ENCODE measurements at regions of chr1 and their contacts with region 1.

Region 1: GRCh38 chr1:1858382-1859086 is 32.4 kb downstream of the GNB1 start:
- DNase-seq: peak; percentile 98
- H3K4me3 ChIP-seq: no peak overlapping the region
- H3K27ac ChIP-seq: peak overlapping the region; percentile 77
- H3K4me1 ChIP-seq: peaks cover 28% of the 10 kb centered on the region
- H3K27me3 ChIP-seq: no peaks in the 10 kb centered on the region
- CTCF ChIP-seq: peak; percentile 37 to 65
- POLR2A ChIP-seq: no peak

Region 2: DNA sequence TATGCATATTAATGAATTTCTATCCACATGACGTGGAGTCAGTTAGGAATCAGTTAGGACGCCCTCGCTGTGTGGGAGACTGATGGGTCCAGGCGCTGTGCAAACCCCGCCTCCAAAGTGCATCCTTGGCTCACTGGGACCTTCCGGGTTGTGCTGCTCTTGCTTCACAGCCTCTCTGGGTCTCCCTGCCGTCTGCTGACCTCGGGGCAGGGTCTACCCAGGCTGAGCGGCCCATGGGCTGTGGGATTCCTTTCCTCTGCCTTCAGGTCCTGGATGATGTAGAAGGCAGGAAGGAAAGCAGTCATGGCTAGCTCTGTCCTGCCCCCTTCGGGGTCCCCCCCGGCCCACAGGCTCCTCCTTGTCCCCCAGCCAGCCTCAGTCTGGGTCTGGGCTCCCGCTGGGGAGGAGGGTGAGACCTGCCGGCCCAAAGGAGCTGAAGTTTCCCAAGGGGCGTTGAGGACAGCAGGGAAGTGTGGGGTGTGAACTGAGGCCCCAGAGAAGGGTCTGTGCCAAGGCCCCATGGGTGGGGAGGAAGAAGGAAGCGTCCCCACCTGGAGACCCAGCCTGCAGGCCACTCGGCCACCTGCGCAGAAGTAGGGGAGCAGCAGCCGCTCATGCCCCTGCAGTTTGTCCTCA is 109.7 kb before region 1 on chr1:
- CTCF ChIA-PET with region 1: no interaction called
- POLR2A ChIA-PET with region 1: no interaction called
- dilution Hi-C with region 1: no loop called
- intact Hi-C with region 1: no loop called
- DNase-seq: no peak
- H3K4me3 ChIP-seq: no peak overlapping the region
- H3K27ac ChIP-seq: no peak overlapping the region
- H3K4me1 ChIP-seq: no peaks in the 10 kb centered on the region
- H3K27me3 ChIP-seq: no peaks in the 10 kb centered on the region
- CTCF ChIP-seq: no peak
- POLR2A ChIP-seq: no peak

Region 3: GRCh38 chr1:1839311-1839975 is 19.1 kb before region 1 on chr1:
- CTCF ChIA-PET with region 1: interaction called, 12 read pairs
- POLR2A ChIA-PET with region 1: no interaction called
- dilution Hi-C with region 1: no loop called
- intact Hi-C with region 1: no loop called
- DNase-seq: no peak
- H3K4me3 ChIP-seq: no peak overlapping the region
- H3K27ac ChIP-seq: no peak overlapping the region
- H3K4me1 ChIP-seq: no peaks in the 10 kb centered on the region
- H3K27me3 ChIP-seq: no peaks in the 10 kb centered on the region
- CTCF ChIP-seq: no peak
- POLR2A ChIP-seq: no peak

Region 4: GRCh38 chr1:1890506-1891348 is 32.2 kb after region 1 on chr1 and contains the start of gene GNB1:
- CTCF ChIA-PET with region 1: interaction called, 6 read pairs
- POLR2A ChIA-PET with region 1: interaction called, 3 read pairs
- dilution Hi-C with region 1: no loop called
- intact Hi-C with region 1: loop called (anchors 1 kb)
- DNase-seq: peak; percentile 86
- H3K4me3 ChIP-seq: peak within 1 kb of the TSS; percentile 79 to 99 (median 99)
- H3K27ac ChIP-seq: peak within 1 kb of the TSS; percentile 83
- H3K4me1 ChIP-seq: peaks cover 22% of the 10 kb centered on the region
- H3K27me3 ChIP-seq: no peaks in the 10 kb centered on the region
- CTCF ChIP-seq: no peak
- POLR2A ChIP-seq: no peak
- total RNA-seq, gene GNB1: 519 and 529 TPM in 2 replicates

Region 5: DNA sequence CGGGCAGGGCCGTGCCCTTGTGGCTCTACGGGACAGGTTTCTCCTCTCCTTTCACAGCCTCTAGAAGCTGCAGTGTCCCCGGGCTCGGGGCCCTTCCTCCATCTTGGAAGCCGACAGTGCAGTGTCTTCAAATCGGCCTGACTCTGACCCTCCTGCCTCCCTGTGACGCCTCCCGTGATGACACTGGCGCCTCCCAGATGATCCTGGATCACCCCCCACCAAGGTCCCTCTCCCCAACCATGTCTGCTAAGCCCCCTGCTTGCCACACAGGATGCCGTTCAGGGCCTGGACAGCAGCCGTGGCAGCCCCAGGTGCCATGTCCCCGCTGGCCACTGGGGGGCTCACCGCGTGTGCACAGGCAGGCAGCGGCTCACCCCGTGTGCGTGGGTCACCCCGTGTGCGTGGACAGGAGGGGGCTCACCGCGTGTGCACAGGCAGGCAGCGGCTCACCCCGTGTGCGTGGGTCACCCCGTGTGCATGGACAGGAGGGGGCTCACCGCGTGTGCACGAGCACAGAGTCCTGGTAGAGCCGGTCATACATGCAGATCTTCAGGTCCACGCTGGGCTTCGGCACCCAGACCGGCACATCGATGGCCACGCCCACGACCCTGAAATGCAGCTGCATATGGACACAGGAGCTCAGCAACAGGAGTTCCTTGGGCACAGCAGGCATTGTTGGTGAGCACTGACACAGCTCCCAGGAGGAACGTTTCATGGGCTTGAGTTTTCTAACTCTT is 85.5 kb after region 1 on chr1:
- CTCF ChIA-PET with region 1: no interaction called
- POLR2A ChIA-PET with region 1: no interaction called
- dilution Hi-C with region 1: no loop called
- intact Hi-C with region 1: no loop called
- DNase-seq: peak; percentile 41
- H3K4me3 ChIP-seq: no peak overlapping the region
- H3K27ac ChIP-seq: no peak overlapping the region
- H3K4me1 ChIP-seq: no peaks in the 10 kb centered on the region
- H3K27me3 ChIP-seq: no peaks in the 10 kb centered on the region
- CTCF ChIP-seq: peak; percentile 74 to 85
- POLR2A ChIP-seq: no peak